Activated B cell treated with CpG ODN at 0.5 μM for 24 hours (primary cell): ENCODE measurements at regions of chr19 and their contacts with region 1.

Region 1: GRCh38 chr19:14218620-14219330 is 12.8 kb upstream of the ADGRL1 start:
- DNase-seq: no peak
- ATAC-seq: no peak
- H3K4me3 Mint-ChIP-seq: no peak overlapping the region
- H3K27ac Mint-ChIP-seq: no peak overlapping the region
- H3K4me1 Mint-ChIP-seq: peaks cover 13% of the 10 kb centered on the region
- H3K27me3 Mint-ChIP-seq: peaks cover 3% of the 10 kb centered on the region
- CTCF ChIP-seq: no peak

Region 2: DNA sequence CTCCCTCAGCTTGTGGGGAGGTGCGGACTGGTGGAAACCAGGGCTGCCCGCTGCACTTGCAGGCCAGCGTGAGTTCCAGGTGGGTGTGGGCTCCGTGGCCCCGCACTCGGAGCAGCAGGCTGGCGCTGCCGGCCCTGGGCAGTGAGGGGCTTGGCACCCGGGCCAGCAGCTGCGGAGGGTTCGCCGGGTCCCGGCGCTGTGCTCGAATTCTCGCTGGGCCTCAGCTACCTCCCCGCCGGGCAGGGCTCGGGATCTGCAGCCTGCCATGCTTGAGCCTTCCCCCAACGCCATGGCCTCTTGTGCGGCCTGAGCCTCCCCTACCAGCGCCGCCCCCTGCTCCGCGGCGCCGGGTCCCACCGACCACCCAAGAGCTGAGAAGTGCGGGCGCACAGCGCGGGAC is 58.8 kb after region 1 on chr19:
- CTCF ChIA-PET with region 1: no interaction called
- POLR2A ChIA-PET with region 1: no interaction called
- intact Hi-C with region 1: loop called (anchors 10 kb)
- DNase-seq: no peak
- ATAC-seq: no peak
- H3K4me3 Mint-ChIP-seq: no peak overlapping the region
- H3K27ac Mint-ChIP-seq: no peak overlapping the region
- H3K4me1 Mint-ChIP-seq: peaks cover 6% of the 10 kb centered on the region
- H3K27me3 Mint-ChIP-seq: peaks cover 10% of the 10 kb centered on the region
- CTCF ChIP-seq: no peak

Region 3: DNA sequence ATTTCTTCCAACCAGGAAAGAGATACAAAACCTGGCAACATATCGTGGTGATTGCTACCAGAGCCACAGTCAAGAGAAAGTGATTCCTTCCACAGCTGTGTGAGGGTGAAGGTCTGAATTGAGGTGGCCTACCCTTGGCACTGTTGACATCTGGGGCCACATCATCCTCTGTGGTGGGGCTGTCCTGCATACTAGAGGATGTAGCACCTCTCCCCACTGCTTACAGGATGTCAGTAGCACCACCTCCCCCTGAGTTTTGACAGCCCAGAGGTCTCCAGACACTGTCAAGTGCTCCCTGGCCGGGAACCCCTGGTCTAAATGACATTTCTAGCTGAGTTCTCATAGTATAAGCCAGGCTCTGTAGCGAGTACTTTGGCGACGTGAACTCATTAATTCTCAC is 240.9 kb after region 1 on chr19:
- CTCF ChIA-PET with region 1: no interaction called
- POLR2A ChIA-PET with region 1: interaction called, 10 read pairs
- intact Hi-C with region 1: no loop called
- DNase-seq: no peak
- ATAC-seq: no peak
- H3K4me3 Mint-ChIP-seq: no peak overlapping the region
- H3K27ac Mint-ChIP-seq: no peak overlapping the region
- H3K4me1 Mint-ChIP-seq: no peaks in the 10 kb centered on the region
- H3K27me3 Mint-ChIP-seq: no peaks in the 10 kb centered on the region
- CTCF ChIP-seq: no peak